Esophagus squamous epithelium (tissue), 5 donors: ENCODE measurements at regions of chr10 and their contacts with region 1.

Region 1: GRCh38 chr10:13439313-13440184 is 89.3 kb downstream of the BEND7 start:
- DNase-seq: no peak
- H3K4me3 ChIP-seq: peak overlapping the region in 3 of 4 donors; percentile 38 to 62 (median 38)
- H3K27ac ChIP-seq: no peak overlapping the region
- H3K4me1 ChIP-seq: peaks cover 0 to 16% (median 10%) of the 10 kb centered on the region in 3 donors
- H3K27me3 ChIP-seq: peaks cover 0 to 65% (median 0%) of the 10 kb centered on the region in 4 donors
- CTCF ChIP-seq: no peak
- POLR2A ChIP-seq: no peak

Region 2: DNA sequence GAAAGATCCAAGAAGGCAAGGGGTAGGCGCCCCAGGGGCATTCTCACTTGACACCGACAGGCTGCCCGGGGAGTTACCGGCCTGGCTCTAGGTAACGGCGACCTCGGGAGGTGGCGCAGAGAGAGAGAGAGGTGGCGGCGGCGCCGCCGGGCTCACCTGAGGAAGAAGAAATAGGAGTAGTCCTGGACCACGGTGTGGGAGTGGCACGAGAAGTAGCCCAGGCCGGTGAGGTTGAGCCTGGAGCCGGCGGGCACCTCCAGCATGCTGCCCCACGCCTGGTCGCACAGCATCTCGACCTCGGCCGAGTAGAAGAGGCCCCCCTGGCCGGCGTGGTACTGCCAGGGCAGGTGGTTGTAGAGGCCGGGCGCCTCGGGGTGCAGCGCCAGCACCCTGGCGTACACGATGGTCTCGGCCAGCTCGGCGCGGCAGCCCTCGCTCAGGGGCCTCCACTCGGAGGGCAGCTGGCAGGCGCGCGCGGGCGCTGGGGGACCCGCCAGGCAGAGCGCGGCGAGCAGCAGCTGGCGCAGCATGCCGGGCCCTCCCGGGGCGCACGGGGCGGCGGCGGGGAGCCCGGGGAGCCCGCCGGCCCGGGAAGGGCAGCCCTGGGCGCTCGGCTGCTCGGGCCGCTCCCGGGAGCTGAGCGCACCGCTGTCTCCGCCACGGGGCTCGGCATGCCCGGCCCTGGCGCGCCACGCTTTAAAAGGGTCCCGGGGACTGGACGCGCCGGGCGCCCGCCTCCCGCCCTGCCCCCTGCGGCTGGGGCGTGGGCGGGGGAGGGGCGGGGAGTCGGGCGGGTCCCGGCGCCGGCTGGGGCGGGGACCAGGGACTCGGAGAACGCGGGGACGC is 438.3 kb before region 1 on chr10 and contains the start of gene CCDC3:
- intact Hi-C with region 1: no loop called
- DNase-seq: no peak
- H3K4me3 ChIP-seq: peak within 1 kb of the TSS; percentile 48 to 69 (median 54)
- H3K27ac ChIP-seq: peak within 1 kb of the TSS; percentile 36 to 81 (median 66)
- H3K4me1 ChIP-seq: peaks cover 0 to 32% (median 0%) of the 10 kb centered on the region in 3 donors
- H3K27me3 ChIP-seq: peaks cover 0 to 17% (median 0%) of the 10 kb centered on the region in 4 donors
- CTCF ChIP-seq: no peak
- POLR2A ChIP-seq: no peak
- total RNA-seq, gene CCDC3: 5.6 to 34.3 (median 13.4) TPM

Region 3: GRCh38 chr10:13371897-13372470 is 67.6 kb before region 1 on chr10:
- intact Hi-C with region 1: loop called (anchors 5 kb)
- DNase-seq: peak; percentile 4
- H3K4me3 ChIP-seq: no peak overlapping the region
- H3K27ac ChIP-seq: no peak overlapping the region
- H3K4me1 ChIP-seq: no peaks in the 10 kb centered on the region
- H3K27me3 ChIP-seq: no peaks in the 10 kb centered on the region
- CTCF ChIP-seq: peak; percentile 73 to 96 (median 91)
- POLR2A ChIP-seq: no peak

Region 4: GRCh38 chr10:13528875-13529713 is 89.5 kb after region 1 on chr10 and contains the start of gene BEND7:
- intact Hi-C with region 1: no loop called
- DNase-seq: no peak
- H3K4me3 ChIP-seq: peak within 1 kb of the TSS; percentile 25 to 75 (median 55)
- H3K27ac ChIP-seq: peak within 1 kb of the TSS; percentile 65 to 85 (median 78)
- H3K4me1 ChIP-seq: peaks cover 4 to 27% (median 7%) of the 10 kb centered on the region in 3 donors
- H3K27me3 ChIP-seq: peaks cover 0 to 35% (median 0%) of the 10 kb centered on the region in 4 donors
- CTCF ChIP-seq: no peak
- POLR2A ChIP-seq: no peak
- total RNA-seq, gene BEND7: 0.70 to 6.7 (median 2.8) TPM

Region 5: DNA sequence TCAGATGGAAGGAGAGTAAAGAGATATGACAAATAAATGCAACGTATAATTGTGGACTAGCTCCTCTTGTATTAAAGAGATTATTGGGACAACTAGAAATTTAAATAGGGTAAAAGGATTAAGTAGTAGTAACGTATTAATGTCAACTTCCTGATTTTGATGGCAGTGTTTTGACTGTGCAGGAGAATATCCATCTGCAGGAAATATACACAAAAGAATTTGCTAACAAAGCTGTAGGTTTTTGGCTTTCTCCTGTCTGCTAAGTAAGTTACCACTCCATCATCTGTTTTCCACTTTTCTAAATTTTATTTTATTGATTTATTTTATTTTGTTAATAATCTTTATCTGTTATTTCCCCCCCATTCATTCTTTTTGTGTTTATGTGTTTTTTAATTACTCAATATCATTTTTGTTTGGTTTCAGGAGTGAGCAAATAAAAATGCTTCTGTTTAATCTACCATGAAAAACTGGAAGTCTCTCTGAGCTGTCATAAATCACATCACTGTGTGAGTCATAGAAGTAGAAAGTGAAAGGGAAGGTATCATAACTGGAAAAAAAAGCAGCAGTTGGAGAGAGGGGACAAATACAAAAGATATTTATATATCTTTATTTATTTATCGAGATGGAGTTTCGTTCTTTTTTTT is 117.2 kb after region 1 on chr10:
- intact Hi-C with region 1: no loop called
- DNase-seq: no peak
- H3K4me3 ChIP-seq: no peak overlapping the region
- H3K27ac ChIP-seq: no peak overlapping the region
- H3K4me1 ChIP-seq: peaks cover 0 to 24% (median 0%) of the 10 kb centered on the region in 3 donors
- H3K27me3 ChIP-seq: peaks cover 0 to under 1% (median 0%) of the 10 kb centered on the region in 4 donors
- CTCF ChIP-seq: no peak
- POLR2A ChIP-seq: no peak